ENCODE measurements at regions of chr3 and their contacts with region 1.

Region 1: DNA sequence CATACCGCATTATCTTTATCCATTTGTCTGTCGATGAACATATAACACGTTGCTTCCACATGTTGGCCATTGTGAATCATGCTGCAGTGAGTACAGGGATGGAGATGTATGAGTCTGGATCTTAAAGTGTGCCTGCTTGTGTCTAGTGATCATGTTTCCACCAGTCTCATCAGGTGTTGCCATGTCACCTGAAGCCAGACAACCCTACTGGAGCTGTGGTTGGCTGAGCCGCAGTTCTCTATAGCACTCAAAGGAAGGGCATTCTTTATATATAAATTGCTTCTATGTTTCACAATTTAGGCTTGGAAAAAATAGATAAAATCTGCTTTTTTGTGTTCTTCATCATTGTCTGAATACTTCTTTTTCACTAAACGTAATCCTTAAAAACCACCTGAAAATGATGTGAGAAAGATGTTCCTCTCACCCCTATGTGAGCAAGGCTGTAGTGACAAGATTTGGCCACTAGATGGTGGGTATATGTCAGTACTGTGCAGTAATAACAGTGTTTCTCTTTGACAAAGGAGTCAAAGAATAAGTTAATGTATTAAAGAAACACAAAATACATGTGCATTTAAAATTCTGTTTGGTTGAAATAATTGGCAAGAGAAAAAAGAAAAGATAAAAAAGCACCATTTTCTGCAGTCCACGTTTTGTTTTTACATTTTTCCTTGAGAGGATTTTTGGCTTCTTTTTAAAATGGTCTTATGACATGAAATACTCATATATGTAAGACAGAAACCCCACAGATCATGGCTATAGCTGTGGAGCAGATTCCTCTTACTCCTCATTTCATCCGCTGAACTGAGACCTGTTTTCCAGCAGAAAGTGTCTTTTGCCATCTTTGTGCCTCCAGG is 394.5 kb upstream of the DPPA4 start:
- DNase-seq: peak; percentile 72
- ATAC-seq: peak; percentile 73
- H3K4me3 Mint-ChIP-seq: no peak overlapping the region
- H3K27ac Mint-ChIP-seq: no peak overlapping the region
- H3K4me1 Mint-ChIP-seq: peaks cover 4% of the 10 kb centered on the region
- H3K27me3 Mint-ChIP-seq: no peaks in the 10 kb centered on the region

Region 2: GRCh38 chr3:109643590-109643989 is 88.3 kb before region 1 on chr3:
- CTCF ChIA-PET with region 1: no interaction called
- POLR2A ChIA-PET with region 1: no interaction called
- intact Hi-C with region 1: no loop called
- DNase-seq: peak; percentile 12
- ATAC-seq: peak; percentile 49
- H3K4me3 Mint-ChIP-seq: no peak overlapping the region
- H3K27ac Mint-ChIP-seq: no peak overlapping the region
- H3K4me1 Mint-ChIP-seq: no peaks in the 10 kb centered on the region
- H3K27me3 Mint-ChIP-seq: peaks cover 5% of the 10 kb centered on the region

Region 3: GRCh38 chr3:109943181-109943580 is 211.3 kb after region 1 on chr3:
- CTCF ChIA-PET with region 1: no interaction called
- POLR2A ChIA-PET with region 1: no interaction called
- intact Hi-C with region 1: loop called in 1 of 2 experiments (anchors 10 kb)
- DNase-seq: no peak
- ATAC-seq: no peak
- H3K4me3 Mint-ChIP-seq: no peak overlapping the region
- H3K27ac Mint-ChIP-seq: no peak overlapping the region
- H3K4me1 Mint-ChIP-seq: no peaks in the 10 kb centered on the region
- H3K27me3 Mint-ChIP-seq: no peaks in the 10 kb centered on the region

Region 4: DNA sequence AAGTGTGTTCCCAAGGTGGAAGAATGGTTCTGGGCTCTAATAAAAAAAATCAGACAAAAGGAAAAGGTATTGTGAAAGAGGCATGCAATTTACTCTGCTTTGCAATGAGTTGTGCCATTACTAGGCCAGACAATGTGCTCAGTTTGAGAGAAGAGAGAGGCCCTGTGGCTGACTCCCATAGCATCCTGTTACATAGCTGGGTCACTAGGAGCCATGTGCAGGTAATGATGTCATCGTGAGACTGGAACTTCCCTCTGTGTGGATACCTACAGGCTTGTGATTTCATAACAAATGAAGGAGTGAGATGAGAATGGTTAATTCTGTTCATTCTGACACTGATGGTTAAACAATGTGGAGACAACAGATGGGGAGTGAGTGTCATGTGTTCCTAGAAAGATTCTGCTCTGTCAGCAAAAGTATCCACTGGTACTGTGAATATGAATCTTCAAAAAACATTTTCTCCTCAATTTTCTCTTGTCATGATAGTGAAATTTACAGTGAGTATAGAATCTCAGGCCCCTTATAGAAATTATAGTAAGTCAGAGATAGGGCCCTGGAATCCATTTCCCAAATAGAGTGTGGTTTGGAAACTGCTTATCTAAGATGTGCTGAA is 254.2 kb after region 1 on chr3:
- CTCF ChIA-PET with region 1: no interaction called
- POLR2A ChIA-PET with region 1: no interaction called
- intact Hi-C with region 1: no loop called
- DNase-seq: no peak
- ATAC-seq: no peak
- H3K4me3 Mint-ChIP-seq: no peak overlapping the region
- H3K27ac Mint-ChIP-seq: no peak overlapping the region
- H3K4me1 Mint-ChIP-seq: no peaks in the 10 kb centered on the region
- H3K27me3 Mint-ChIP-seq: no peaks in the 10 kb centered on the region

Region 5: DNA sequence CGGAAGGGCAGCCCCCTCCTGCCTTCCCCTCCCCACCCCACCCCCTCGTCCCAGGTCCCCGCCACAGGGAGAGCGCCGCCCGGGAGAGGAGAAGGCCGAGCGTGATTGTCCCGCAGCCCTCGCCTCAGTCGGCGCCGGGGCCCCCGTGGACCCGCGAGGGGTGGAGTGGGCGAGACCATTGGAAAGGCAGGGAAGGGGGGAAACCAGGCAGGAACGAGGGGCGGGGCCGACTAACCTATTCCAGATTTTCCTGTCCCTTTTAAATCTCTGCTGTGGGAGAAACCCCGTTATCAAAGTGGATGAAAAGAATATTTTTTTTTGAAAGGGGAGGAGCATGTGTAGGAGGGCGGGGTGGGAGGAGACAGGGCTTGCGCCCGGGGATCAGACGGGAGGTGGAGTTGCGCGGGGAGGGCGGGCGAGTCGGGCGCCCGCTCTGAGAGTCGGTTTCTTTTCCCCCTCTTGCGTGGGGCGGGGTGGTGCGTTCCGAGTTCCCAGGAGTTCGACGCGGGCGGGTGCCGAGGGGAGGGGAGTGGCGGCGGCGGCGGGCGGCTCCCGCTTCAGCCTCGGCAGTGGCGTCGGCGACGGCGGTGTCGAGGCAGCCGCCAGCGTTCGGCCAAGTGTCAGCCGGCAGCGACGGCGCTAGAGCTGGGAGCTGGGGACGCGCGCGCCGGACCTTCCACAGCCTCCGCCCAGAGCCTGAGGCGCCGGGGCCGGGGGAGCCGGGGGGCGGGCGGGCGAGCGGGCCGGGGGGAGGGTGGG is 1339.6 kb after region 1 on chr3 and contains the start of gene NECTIN3:
- CTCF ChIA-PET with region 1: no interaction called
- POLR2A ChIA-PET with region 1: no interaction called
- intact Hi-C with region 1: loop called in 1 of 2 experiments (anchors 10 kb)
- DNase-seq: peak; percentile 91
- ATAC-seq: peak; percentile 95
- H3K4me3 Mint-ChIP-seq: peak within 1 kb of the TSS; percentile 83
- H3K27ac Mint-ChIP-seq: peak within 1 kb of the TSS; percentile 80
- H3K4me1 Mint-ChIP-seq: peaks cover 28% of the 10 kb centered on the region
- H3K27me3 Mint-ChIP-seq: peaks cover 40% of the 10 kb centered on the region
- total RNA-seq, gene NECTIN3: 5.1 to 5.9 TPM